Calu3 (cell line): ENCODE measurements at regions of chr1 and their contacts with region 1.

Region 1: DNA sequence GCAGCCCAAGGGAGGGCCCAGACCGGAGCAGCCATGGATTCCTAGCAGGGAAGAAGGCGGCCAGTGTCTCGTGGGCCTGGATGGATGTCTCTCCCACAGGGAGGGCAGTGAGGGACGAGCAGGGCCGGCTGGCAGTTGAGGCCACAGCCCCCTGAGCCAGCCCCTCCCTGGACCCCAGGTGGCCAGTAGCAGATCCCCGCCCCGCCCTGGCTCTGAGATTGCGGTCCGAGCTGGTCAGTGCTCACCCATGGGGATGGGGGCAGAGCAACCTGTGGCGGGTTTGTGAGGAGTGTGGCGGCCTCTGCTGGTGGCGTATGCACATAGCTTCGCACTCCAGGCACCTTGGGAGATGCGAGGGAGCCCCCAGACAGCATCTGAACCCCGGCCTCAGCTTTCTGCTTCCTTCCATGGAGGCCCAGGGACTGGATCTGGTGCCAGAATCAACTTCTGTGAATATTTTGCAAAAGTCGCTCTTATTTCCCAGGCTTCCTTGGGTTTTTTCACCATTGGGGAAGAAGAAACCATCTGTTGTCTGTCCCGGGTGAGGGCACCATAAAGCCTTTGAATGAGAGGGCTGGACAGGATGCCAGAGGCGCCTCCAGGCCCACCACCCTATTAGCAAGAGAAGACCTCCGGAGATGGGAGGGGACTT is 8.4 kb upstream of the KCNN3 start:
- DNase-seq: peak; percentile 87
- H3K4me3 Mint-ChIP-seq: no peak overlapping the region
- H3K27ac Mint-ChIP-seq: no peak overlapping the region
- H3K4me1 Mint-ChIP-seq: peaks cover 31% of the 10 kb centered on the region
- H3K27me3 Mint-ChIP-seq: peaks cover 56% of the 10 kb centered on the region
- CTCF ChIP-seq: peak; percentile 80

Region 2: DNA sequence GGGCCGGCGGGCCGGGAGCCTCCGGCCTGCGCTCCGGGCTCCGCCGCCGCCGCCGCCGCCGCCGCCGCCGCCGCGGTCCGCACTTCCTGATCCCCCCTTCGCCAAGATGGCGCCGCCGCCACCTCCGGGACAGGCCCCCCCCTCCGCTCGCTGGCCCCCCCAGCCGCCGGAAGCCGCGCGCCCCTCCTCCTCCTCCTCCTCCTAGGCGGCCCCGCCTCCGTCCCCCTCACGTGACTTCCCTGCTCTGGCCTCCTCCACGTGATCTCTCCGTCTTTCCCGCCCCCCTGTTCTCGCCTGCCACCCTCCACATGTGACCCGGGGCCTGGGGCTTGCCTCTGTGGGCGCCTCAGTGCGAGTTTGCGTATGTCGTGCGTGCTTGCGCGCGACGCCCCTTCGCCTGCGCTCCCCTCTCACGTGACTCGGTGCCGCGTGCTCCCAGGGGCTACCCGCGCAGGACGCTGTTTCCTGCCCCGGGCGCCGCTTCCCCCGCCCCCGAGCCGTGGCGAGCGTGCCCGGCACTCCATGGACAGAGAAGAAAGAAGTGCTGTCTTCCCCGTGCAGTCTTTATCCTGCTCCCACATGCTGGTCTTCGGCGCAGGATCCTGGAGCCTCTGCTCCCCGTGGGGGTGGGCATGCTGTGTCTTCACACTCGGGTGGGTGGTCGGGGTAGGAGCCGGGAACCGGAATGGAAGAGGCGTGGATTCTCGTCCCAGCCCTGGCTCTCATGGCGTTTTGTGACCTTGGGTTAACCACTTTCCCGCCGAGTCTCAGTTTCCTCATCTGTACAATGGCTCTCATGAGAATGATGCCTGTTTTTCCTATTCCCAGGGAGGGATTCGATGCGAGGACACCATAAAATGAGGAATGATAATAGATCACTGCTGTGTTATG is 319.7 kb before region 1 on chr1 and contains the start of gene UBE2Q1:
- CTCF ChIA-PET with region 1: interaction called, 11 read pairs
- intact Hi-C with region 1: loop called (anchors 1 kb)
- DNase-seq: peak; percentile 99
- H3K4me3 Mint-ChIP-seq: peak within 1 kb of the TSS; percentile 83
- H3K27ac Mint-ChIP-seq: peak within 1 kb of the TSS; percentile 84
- H3K4me1 Mint-ChIP-seq: peaks cover 16% of the 10 kb centered on the region
- H3K27me3 Mint-ChIP-seq: no peaks in the 10 kb centered on the region
- CTCF ChIP-seq: no peak
- total RNA-seq, gene UBE2Q1: 96.7 and 108 TPM in 2 replicates

Region 3: GRCh38 chr1:154765970-154766369 is 112.5 kb before region 1 on chr1:
- CTCF ChIA-PET with region 1: interaction called, 11 read pairs
- intact Hi-C with region 1: loop called (anchors 1 kb)
- DNase-seq: peak; percentile 61
- H3K4me3 Mint-ChIP-seq: no peak overlapping the region
- H3K27ac Mint-ChIP-seq: no peak overlapping the region
- H3K4me1 Mint-ChIP-seq: no peaks in the 10 kb centered on the region
- H3K27me3 Mint-ChIP-seq: peaks cover 78% of the 10 kb centered on the region
- CTCF ChIP-seq: peak; percentile 39